ENCODE measurements at regions of chr14 and their contacts with region 1.

Region 1: DNA sequence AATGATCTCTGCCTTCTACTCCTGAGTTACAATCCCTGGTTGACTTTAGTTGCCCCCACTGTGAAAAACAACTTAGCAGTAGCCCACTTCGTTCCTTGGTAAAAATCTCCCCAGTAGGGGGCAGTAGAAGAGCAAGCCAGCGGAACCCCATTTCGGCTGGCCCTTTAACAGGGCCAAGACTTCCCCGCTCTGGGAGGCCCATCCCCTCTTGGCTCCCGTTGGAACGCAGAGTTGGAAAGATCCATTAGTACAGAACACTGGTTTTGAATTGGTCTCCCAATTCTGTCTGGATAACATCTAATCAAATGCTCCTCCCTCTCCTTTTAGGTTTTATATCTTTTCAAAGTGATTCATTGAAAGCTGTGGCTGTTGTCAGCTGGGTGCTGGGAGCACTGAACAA is 1133.3 kb downstream of the BCL11B start:
- DNase-seq: peak; percentile 35 to 87 (median 81)
- ATAC-seq: peak; percentile 75
- H3K4me3 ChIP-seq: peak overlapping the region; percentile 52
- H3K4me3 Mint-ChIP-seq: peak overlapping the region; percentile 75 to 99 (median 93)
- H3K27ac ChIP-seq: peak overlapping the region; percentile 78
- H3K27ac Mint-ChIP-seq: peak overlapping the region; percentile 90 to 99 (median 96)
- H3K4me1 ChIP-seq: peaks cover 70 to 76% of the 10 kb centered on the region in 2 donors
- H3K4me1 Mint-ChIP-seq: peaks cover 66 to 100% (median 96%) of the 10 kb centered on the region in 7 donors
- H3K27me3 ChIP-seq: no peaks in the 10 kb centered on the region
- H3K27me3 Mint-ChIP-seq: no peaks in the 10 kb centered on the region

Region 2: GRCh38 chr14:97299661-97300060 is 839.0 kb before region 1 on chr14:
- CTCF ChIA-PET with region 1: no interaction called
- POLR2A ChIA-PET with region 1: no interaction called
- intact Hi-C with region 1: loop called in 1 of 2 experiments (anchors 5 kb)
- DNase-seq: peak in 5 of 9 donors; percentile 16 to 31 (median 22)
- ATAC-seq: peak; percentile 54
- H3K4me3 ChIP-seq: no peak overlapping the region
- H3K4me3 Mint-ChIP-seq: no peak overlapping the region
- H3K27ac ChIP-seq: no peak overlapping the region
- H3K27ac Mint-ChIP-seq: peak overlapping the region in 2 of 9 donors; percentile 28 to 48
- H3K4me1 ChIP-seq: peaks cover 0 to 4% of the 10 kb centered on the region in 2 donors
- H3K4me1 Mint-ChIP-seq: peaks cover 4 to 23% (median 12%) of the 10 kb centered on the region in 7 donors
- H3K27me3 ChIP-seq: no peaks in the 10 kb centered on the region
- H3K27me3 Mint-ChIP-seq: peaks cover 0 to 30% (median 0%) of the 10 kb centered on the region in 5 donors

Region 3: DNA sequence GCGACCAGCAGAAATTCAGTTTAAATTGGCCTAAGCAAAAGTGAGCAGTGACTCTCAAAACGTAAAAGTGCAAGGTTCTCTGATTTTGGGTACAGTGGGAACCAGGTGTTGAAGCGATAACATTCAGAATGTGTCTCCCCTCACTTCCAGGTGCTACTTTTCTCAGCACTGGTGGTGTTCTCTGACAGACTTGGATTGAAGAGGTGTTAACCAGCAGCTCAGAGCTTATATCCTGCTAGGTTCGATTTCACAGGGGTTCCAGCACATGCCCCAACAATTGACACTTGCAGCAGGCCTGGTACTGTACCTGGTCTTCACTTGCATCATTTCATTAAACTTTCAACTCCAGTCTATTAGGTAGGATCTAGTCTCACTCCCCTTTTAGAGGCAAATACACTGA is 661.3 kb before region 1 on chr14:
- CTCF ChIA-PET with region 1: no interaction called
- POLR2A ChIA-PET with region 1: no interaction called
- intact Hi-C with region 1: no loop called
- DNase-seq: no peak
- ATAC-seq: no peak
- H3K4me3 ChIP-seq: no peak overlapping the region
- H3K4me3 Mint-ChIP-seq: no peak overlapping the region
- H3K27ac ChIP-seq: no peak overlapping the region
- H3K27ac Mint-ChIP-seq: peak overlapping the region in 1 of 9 donors; percentile 2
- H3K4me1 ChIP-seq: no peaks in the 10 kb centered on the region
- H3K4me1 Mint-ChIP-seq: peaks cover 2 to 21% (median 14%) of the 10 kb centered on the region in 7 donors
- H3K27me3 ChIP-seq: no peaks in the 10 kb centered on the region
- H3K27me3 Mint-ChIP-seq: no peaks in the 10 kb centered on the region

Region 4: GRCh38 chr14:97978341-97978740 is 160.3 kb before region 1 on chr14:
- CTCF ChIA-PET with region 1: interaction called, 75 read pairs
- POLR2A ChIA-PET with region 1: interaction called, 174 read pairs
- intact Hi-C with region 1: loop called (anchors 1 kb)
- DNase-seq: peak; percentile 33 to 83 (median 72)
- ATAC-seq: peak; percentile 84
- H3K4me3 ChIP-seq: peak overlapping the region; percentile 91
- H3K4me3 Mint-ChIP-seq: peak overlapping the region; percentile 85 to 99 (median 93)
- H3K27ac ChIP-seq: peak overlapping the region; percentile 85
- H3K27ac Mint-ChIP-seq: peak overlapping the region; percentile 68 to 99 (median 92)
- H3K4me1 ChIP-seq: peaks cover 25 to 40% of the 10 kb centered on the region in 2 donors
- H3K4me1 Mint-ChIP-seq: peaks cover 32 to 64% (median 50%) of the 10 kb centered on the region in 7 donors
- H3K27me3 ChIP-seq: no peaks in the 10 kb centered on the region
- H3K27me3 Mint-ChIP-seq: no peaks in the 10 kb centered on the region

Region 5: GRCh38 chr14:98198385-98198784 is 59.7 kb after region 1 on chr14:
- CTCF ChIA-PET with region 1: interaction called, 279 read pairs
- POLR2A ChIA-PET with region 1: interaction called, 501 read pairs
- intact Hi-C with region 1: loop called in 1 of 2 experiments (anchors 1 kb)
- DNase-seq: peak in 4 of 9 donors; percentile 25 to 43 (median 32)
- ATAC-seq: peak; percentile 67
- H3K4me3 ChIP-seq: peak overlapping the region; percentile 18
- H3K4me3 Mint-ChIP-seq: peak overlapping the region; percentile 18 to 84 (median 78)
- H3K27ac ChIP-seq: peak overlapping the region; percentile 33
- H3K27ac Mint-ChIP-seq: peak overlapping the region; percentile 74 to 100 (median 97)
- H3K4me1 ChIP-seq: peaks cover 43 to 80% of the 10 kb centered on the region in 2 donors
- H3K4me1 Mint-ChIP-seq: peaks cover 28 to 95% (median 86%) of the 10 kb centered on the region in 7 donors
- H3K27me3 ChIP-seq: no peaks in the 10 kb centered on the region
- H3K27me3 Mint-ChIP-seq: no peaks in the 10 kb centered on the region

Region 6: GRCh38 chr14:98564541-98564940 is 425.9 kb after region 1 on chr14:
- CTCF ChIA-PET with region 1: no interaction called
- POLR2A ChIA-PET with region 1: no interaction called
- intact Hi-C with region 1: loop called in 1 of 2 experiments (anchors 10 kb)
- DNase-seq: no peak
- ATAC-seq: no peak
- H3K4me3 ChIP-seq: no peak overlapping the region
- H3K4me3 Mint-ChIP-seq: no peak overlapping the region
- H3K27ac ChIP-seq: no peak overlapping the region
- H3K27ac Mint-ChIP-seq: no peak overlapping the region
- H3K4me1 ChIP-seq: no peaks in the 10 kb centered on the region
- H3K4me1 Mint-ChIP-seq: peaks cover 0 to 34% (median 15%) of the 10 kb centered on the region in 7 donors
- H3K27me3 ChIP-seq: no peaks in the 10 kb centered on the region
- H3K27me3 Mint-ChIP-seq: peaks cover 0 to 4% (median 0%) of the 10 kb centered on the region in 5 donors

Region 7: DNA sequence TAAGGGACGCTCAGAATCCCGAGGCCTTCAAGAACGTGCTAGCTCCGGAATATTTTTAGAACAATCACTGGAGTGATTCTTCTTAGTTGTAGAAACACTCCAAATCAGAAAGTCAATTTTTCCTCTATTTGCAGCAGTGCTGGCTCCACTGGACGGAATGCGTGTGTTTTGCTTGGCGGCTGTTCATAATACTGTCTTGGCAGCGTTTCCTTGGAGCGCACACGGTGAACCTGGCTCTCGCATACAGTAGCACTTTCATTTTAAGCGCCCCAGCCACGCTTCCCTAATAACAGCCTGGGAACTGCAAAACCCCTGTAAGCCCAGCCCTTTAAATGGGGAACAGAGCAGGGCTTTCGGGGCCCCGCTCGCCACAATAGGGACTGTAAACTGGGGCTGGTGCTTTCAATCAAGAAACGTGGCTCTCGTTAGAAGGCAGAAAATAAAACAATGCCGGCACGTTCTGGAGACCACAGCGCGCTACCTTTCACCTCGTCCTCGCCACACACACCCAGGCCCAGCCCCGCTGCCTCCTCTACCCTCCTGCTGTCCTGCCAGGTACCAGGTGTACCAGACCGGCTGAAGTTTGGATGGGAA is 1053.5 kb after region 1 on chr14:
- CTCF ChIA-PET with region 1: interaction called, 5 read pairs
- POLR2A ChIA-PET with region 1: interaction called, 10 read pairs
- intact Hi-C with region 1: loop called (anchors 2 to 5 kb)
- DNase-seq: peak in 3 of 9 donors; percentile 45 to 64 (median 49)
- ATAC-seq: peak; percentile 28
- H3K4me3 ChIP-seq: peak overlapping the region; percentile 61
- H3K4me3 Mint-ChIP-seq: peak overlapping the region; percentile 85 to 94 (median 90)
- H3K27ac ChIP-seq: peak overlapping the region; percentile 85
- H3K27ac Mint-ChIP-seq: peak overlapping the region; percentile 93 to 100 (median 98)
- H3K4me1 ChIP-seq: peaks cover 84 to 85% of the 10 kb centered on the region in 2 donors
- H3K4me1 Mint-ChIP-seq: peaks cover 55 to 97% (median 93%) of the 10 kb centered on the region in 7 donors
- H3K27me3 ChIP-seq: no peaks in the 10 kb centered on the region
- H3K27me3 Mint-ChIP-seq: no peaks in the 10 kb centered on the region

Measured in naive thymus-derived CD4-positive, alpha-beta T cell (primary cell).